Activated naive CD4-positive, alpha-beta T cell treated with anti-CD3 and anti-CD28 coated beads for 36 hours (primary cell): ENCODE measurements at regions of chr1 and their contacts with region 1.

Region 1: GRCh38 chr1:54488779-54489626 is 59.0 kb upstream of the ACOT11 start:
- DNase-seq: peak; percentile 61
- H3K4me3 Mint-ChIP-seq: peak overlapping the region; percentile 76
- H3K27ac Mint-ChIP-seq: peak overlapping the region; percentile 63
- H3K4me1 Mint-ChIP-seq: peaks cover 37% of the 10 kb centered on the region
- H3K27me3 Mint-ChIP-seq: peaks cover 2% of the 10 kb centered on the region

Region 2: GRCh38 chr1:54070171-54070837 is 418.7 kb before region 1 on chr1:
- CTCF ChIA-PET with region 1: interaction called, 3 read pairs
- intact Hi-C with region 1: loop called (anchors 1 kb)
- DNase-seq: no peak
- H3K4me3 Mint-ChIP-seq: no peak overlapping the region
- H3K27ac Mint-ChIP-seq: no peak overlapping the region
- H3K4me1 Mint-ChIP-seq: no peaks in the 10 kb centered on the region
- H3K27me3 Mint-ChIP-seq: no peaks in the 10 kb centered on the region

Region 3: DNA sequence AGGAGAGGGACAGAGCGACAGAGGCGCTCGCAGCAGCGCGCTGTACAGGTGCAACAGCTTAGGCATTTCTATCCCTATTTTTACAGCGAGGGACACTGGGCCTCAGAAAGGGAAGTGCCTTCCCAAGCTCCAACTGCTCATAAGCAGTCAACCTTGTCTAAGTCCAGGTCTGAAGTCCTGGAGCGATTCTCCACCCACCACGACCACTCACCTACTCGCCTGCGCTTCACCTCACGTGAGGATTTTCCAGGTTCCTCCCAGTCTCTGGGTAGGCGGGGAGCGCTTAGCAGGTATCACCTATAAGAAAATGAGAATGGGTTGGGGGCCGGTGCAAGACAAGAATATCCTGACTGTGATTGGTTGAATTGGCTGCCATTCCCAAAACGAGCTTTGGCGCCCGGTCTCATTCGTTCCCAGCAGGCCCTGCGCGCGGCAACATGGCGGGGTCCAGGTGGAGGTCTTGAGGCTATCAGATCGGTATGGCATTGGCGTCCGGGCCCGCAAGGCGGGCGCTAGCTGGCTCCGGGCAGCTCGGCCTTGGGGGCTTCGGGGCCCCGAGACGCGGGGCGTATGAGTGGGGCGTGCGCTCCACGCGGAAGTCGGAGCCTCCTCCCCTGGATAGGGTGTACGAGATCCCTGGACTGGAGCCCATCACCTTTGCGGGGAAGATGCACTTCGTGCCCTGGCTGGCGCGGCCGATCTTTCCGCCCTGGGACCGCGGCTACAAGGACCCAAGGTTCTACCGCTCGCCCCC is 289.1 kb before region 1 on chr1 and contains the starts of genes CYB5RL and MRPL37:
- CTCF ChIA-PET with region 1: interaction called, 23 read pairs
- intact Hi-C with region 1: loop called (anchors 1 kb)
- DNase-seq: peak; percentile 96
- H3K4me3 Mint-ChIP-seq: peak within 1 kb of the TSS; percentile 92
- H3K27ac Mint-ChIP-seq: peak within 1 kb of the TSS; percentile 59
- H3K4me1 Mint-ChIP-seq: peaks cover 32% of the 10 kb centered on the region
- H3K27me3 Mint-ChIP-seq: no peaks in the 10 kb centered on the region
- total RNA-seq, gene CYB5RL: 12.7 to 13.6 TPM
- total RNA-seq, gene MRPL37: 203 to 211 TPM

Region 4: GRCh38 chr1:54310439-54311328 is 178.3 kb before region 1 on chr1:
- CTCF ChIA-PET with region 1: interaction called, 7 read pairs
- intact Hi-C with region 1: loop called (anchors 2 kb)
- DNase-seq: peak; percentile 46
- H3K4me3 Mint-ChIP-seq: no peak overlapping the region
- H3K27ac Mint-ChIP-seq: peak overlapping the region; percentile 62
- H3K4me1 Mint-ChIP-seq: peaks cover 68% of the 10 kb centered on the region
- H3K27me3 Mint-ChIP-seq: no peaks in the 10 kb centered on the region

Region 5: GRCh38 chr1:54474639-54475251 is 14.3 kb before region 1 on chr1:
- CTCF ChIA-PET with region 1: interaction called, 5 read pairs
- intact Hi-C with region 1: loop called (anchors 1 kb)
- DNase-seq: peak; percentile 57
- H3K4me3 Mint-ChIP-seq: peak overlapping the region; percentile 64
- H3K27ac Mint-ChIP-seq: no peak overlapping the region
- H3K4me1 Mint-ChIP-seq: peaks cover 43% of the 10 kb centered on the region
- H3K27me3 Mint-ChIP-seq: no peaks in the 10 kb centered on the region